ENCODE measurements at regions of chr6 and their contacts with region 1.

Region 1: DNA sequence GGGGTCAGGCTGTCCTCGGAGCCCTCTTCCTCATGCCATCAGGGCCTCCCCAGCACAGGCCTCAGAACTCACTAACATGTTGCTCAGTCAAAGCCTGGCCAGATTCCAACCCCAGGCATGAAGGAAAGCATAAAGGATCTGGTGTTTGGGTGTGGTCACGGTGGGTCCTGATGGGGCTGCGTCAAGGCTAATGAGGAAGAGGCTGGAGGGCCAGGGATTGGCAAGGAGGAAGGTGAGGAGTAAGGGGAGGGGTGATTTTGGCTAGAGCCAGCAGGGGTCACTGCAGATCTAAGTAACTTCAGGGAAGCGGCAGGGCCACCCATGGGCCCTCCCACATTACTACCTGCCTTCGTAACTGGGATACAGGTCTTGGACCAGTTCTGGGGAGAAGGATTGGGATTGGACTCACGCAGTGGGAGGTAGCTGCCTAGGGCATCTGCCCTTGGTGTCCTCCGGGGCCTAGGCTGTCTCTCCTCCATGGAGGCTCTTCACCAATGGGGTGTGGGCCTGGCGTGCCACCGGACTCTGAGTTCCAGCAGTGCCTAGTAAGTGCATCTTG is 36.2 kb upstream of the MRPS18A start:
- DNase-seq: peak; percentile 42 to 68 (median 60)
- ATAC-seq: peak; percentile 77
- H3K4me3 ChIP-seq: no peak overlapping the region
- H3K4me3 Mint-ChIP-seq: peak overlapping the region in 3 of 10 donors; percentile 55 to 67 (median 66)
- H3K27ac ChIP-seq: no peak overlapping the region
- H3K27ac Mint-ChIP-seq: peak overlapping the region in 3 of 9 donors; percentile 3 to 97 (median 67)
- H3K4me1 ChIP-seq: peaks cover 19 to 23% of the 10 kb centered on the region in 2 donors
- H3K4me1 Mint-ChIP-seq: peaks cover 20 to 38% (median 29%) of the 10 kb centered on the region in 7 donors
- H3K27me3 ChIP-seq: no peaks in the 10 kb centered on the region
- H3K27me3 Mint-ChIP-seq: peaks cover 0 to 7% (median 0%) of the 10 kb centered on the region in 5 donors

Region 2: GRCh38 chr6:43286980-43287716 is 436.7 kb before region 1 on chr6:
- CTCF ChIA-PET with region 1: no interaction called
- POLR2A ChIA-PET with region 1: no interaction called
- intact Hi-C with region 1: no loop called
- DNase-seq: no peak
- ATAC-seq: peak; percentile 10
- H3K4me3 ChIP-seq: no peak overlapping the region
- H3K4me3 Mint-ChIP-seq: no peak overlapping the region
- H3K27ac ChIP-seq: no peak overlapping the region
- H3K27ac Mint-ChIP-seq: no peak overlapping the region
- H3K4me1 ChIP-seq: no peaks in the 10 kb centered on the region
- H3K4me1 Mint-ChIP-seq: peaks cover 0 to 3% (median 0%) of the 10 kb centered on the region in 7 donors
- H3K27me3 ChIP-seq: no peaks in the 10 kb centered on the region
- H3K27me3 Mint-ChIP-seq: peaks cover 4 to 44% (median 18%) of the 10 kb centered on the region in 5 donors

Region 3: DNA sequence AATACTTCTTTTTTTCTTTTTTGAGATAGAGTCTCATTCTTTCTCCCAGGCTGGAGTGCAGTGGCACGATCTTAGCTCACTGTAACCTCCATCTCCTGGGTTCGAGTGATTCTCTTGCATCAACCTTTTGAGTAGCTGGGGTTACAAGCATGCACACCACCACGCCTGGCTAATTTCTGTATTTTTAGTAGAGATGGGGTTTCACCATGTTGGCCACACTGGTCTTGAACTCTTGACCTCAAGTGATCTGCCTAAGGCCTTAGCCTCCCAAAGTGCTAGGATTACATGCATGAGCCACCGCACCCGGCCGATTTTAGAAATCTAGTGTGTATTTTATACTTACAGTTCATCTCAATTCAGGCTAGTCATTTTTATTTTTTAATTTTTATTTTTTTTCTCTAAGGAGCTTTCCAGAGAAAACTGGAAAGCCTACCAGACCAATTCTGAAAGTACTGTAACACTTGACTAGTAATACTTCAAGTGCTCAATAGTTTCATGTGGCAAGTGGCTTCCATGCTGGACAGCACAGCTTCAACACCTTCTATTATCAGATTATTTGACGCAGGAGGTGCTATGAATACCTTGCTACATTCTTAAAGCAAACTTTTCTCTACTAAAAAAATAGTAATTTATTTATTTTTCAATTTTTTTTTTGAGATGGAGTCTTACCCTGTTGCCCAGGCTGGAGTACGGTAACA is 181.9 kb before region 1 on chr6:
- CTCF ChIA-PET with region 1: no interaction called
- POLR2A ChIA-PET with region 1: no interaction called
- intact Hi-C with region 1: no loop called
- DNase-seq: no peak
- ATAC-seq: no peak
- H3K4me3 ChIP-seq: no peak overlapping the region
- H3K4me3 Mint-ChIP-seq: no peak overlapping the region
- H3K27ac ChIP-seq: no peak overlapping the region
- H3K27ac Mint-ChIP-seq: peak overlapping the region in 3 of 9 donors; percentile 5 to 61 (median 18)
- H3K4me1 ChIP-seq: no peaks in the 10 kb centered on the region
- H3K4me1 Mint-ChIP-seq: no peaks in the 10 kb centered on the region
- H3K27me3 ChIP-seq: no peaks in the 10 kb centered on the region
- H3K27me3 Mint-ChIP-seq: no peaks in the 10 kb centered on the region

Region 4: GRCh38 chr6:43817192-43817591 is 93.4 kb after region 1 on chr6:
- CTCF ChIA-PET with region 1: no interaction called
- POLR2A ChIA-PET with region 1: no interaction called
- intact Hi-C with region 1: loop called in 1 of 2 experiments (anchors 5 kb)
- DNase-seq: peak in 1 of 9 donors; percentile 9
- ATAC-seq: peak; percentile 81
- H3K4me3 ChIP-seq: no peak overlapping the region
- H3K4me3 Mint-ChIP-seq: no peak overlapping the region
- H3K27ac ChIP-seq: no peak overlapping the region
- H3K27ac Mint-ChIP-seq: peak overlapping the region in 1 of 9 donors; percentile 5
- H3K4me1 ChIP-seq: peaks cover 0 to 8% of the 10 kb centered on the region in 2 donors
- H3K4me1 Mint-ChIP-seq: peaks cover 0 to 15% (median 10%) of the 10 kb centered on the region in 7 donors
- H3K27me3 ChIP-seq: no peaks in the 10 kb centered on the region
- H3K27me3 Mint-ChIP-seq: peaks cover 0 to 17% (median 0%) of the 10 kb centered on the region in 5 donors

Region 5: GRCh38 chr6:43838276-43839036 is 114.6 kb after region 1 on chr6:
- CTCF ChIA-PET with region 1: no interaction called
- POLR2A ChIA-PET with region 1: no interaction called
- intact Hi-C with region 1: loop called in 1 of 2 experiments (anchors 10 kb)
- DNase-seq: no peak
- ATAC-seq: peak; percentile 80
- H3K4me3 ChIP-seq: no peak overlapping the region
- H3K4me3 Mint-ChIP-seq: no peak overlapping the region
- H3K27ac ChIP-seq: no peak overlapping the region
- H3K27ac Mint-ChIP-seq: no peak overlapping the region
- H3K4me1 ChIP-seq: no peaks in the 10 kb centered on the region
- H3K4me1 Mint-ChIP-seq: no peaks in the 10 kb centered on the region
- H3K27me3 ChIP-seq: no peaks in the 10 kb centered on the region
- H3K27me3 Mint-ChIP-seq: peaks cover 0 to 8% (median 0%) of the 10 kb centered on the region in 5 donors

Region 6: GRCh38 chr6:44002593-44003344 is 279.0 kb after region 1 on chr6:
- CTCF ChIA-PET with region 1: no interaction called
- POLR2A ChIA-PET with region 1: no interaction called
- intact Hi-C with region 1: loop called in 1 of 2 experiments (anchors 5 kb)
- DNase-seq: peak; percentile 18 to 75 (median 45)
- ATAC-seq: peak; percentile 69
- H3K4me3 ChIP-seq: peak overlapping the region; percentile 44
- H3K4me3 Mint-ChIP-seq: peak overlapping the region; percentile 58 to 81 (median 74)
- H3K27ac ChIP-seq: no peak overlapping the region
- H3K27ac Mint-ChIP-seq: no peak overlapping the region
- H3K4me1 ChIP-seq: peaks cover 3 to 4% of the 10 kb centered on the region in 2 donors
- H3K4me1 Mint-ChIP-seq: peaks cover 0 to 20% (median 8%) of the 10 kb centered on the region in 7 donors
- H3K27me3 ChIP-seq: peaks cover 0 to 5% of the 10 kb centered on the region in 2 donors
- H3K27me3 Mint-ChIP-seq: peaks cover 22 to 46% (median 37%) of the 10 kb centered on the region in 5 donors

Region 7: GRCh38 chr6:44151348-44152108 is 427.7 kb after region 1 on chr6:
- CTCF ChIA-PET with region 1: no interaction called
- POLR2A ChIA-PET with region 1: no interaction called
- intact Hi-C with region 1: loop called in 1 of 2 experiments (anchors 5 kb)
- DNase-seq: peak; percentile 63 to 88 (median 73)
- ATAC-seq: peak; percentile 94
- H3K4me3 ChIP-seq: no peak overlapping the region
- H3K4me3 Mint-ChIP-seq: peak overlapping the region in 3 of 10 donors; percentile 30 to 42 (median 34)
- H3K27ac ChIP-seq: no peak overlapping the region
- H3K27ac Mint-ChIP-seq: peak overlapping the region in 3 of 9 donors; percentile 5 to 43 (median 34)
- H3K4me1 ChIP-seq: peaks cover 3 to 8% of the 10 kb centered on the region in 2 donors
- H3K4me1 Mint-ChIP-seq: peaks cover 0 to 7% (median 4%) of the 10 kb centered on the region in 7 donors
- H3K27me3 ChIP-seq: no peaks in the 10 kb centered on the region
- H3K27me3 Mint-ChIP-seq: no peaks in the 10 kb centered on the region

Region 8: GRCh38 chr6:44338228-44339122 is 614.7 kb after region 1 on chr6:
- CTCF ChIA-PET with region 1: no interaction called
- POLR2A ChIA-PET with region 1: no interaction called
- intact Hi-C with region 1: loop called in 1 of 2 experiments (anchors 1 kb)
- DNase-seq: peak; percentile 43 to 67 (median 62)
- ATAC-seq: peak; percentile 92
- H3K4me3 ChIP-seq: no peak overlapping the region
- H3K4me3 Mint-ChIP-seq: no peak overlapping the region
- H3K27ac ChIP-seq: no peak overlapping the region
- H3K27ac Mint-ChIP-seq: no peak overlapping the region
- H3K4me1 ChIP-seq: no peaks in the 10 kb centered on the region
- H3K4me1 Mint-ChIP-seq: peaks cover 0 to 4% (median 0%) of the 10 kb centered on the region in 7 donors
- H3K27me3 ChIP-seq: no peaks in the 10 kb centered on the region
- H3K27me3 Mint-ChIP-seq: peaks cover 18 to 33% (median 24%) of the 10 kb centered on the region in 5 donors

Measured in naive thymus-derived CD4-positive, alpha-beta T cell (primary cell).